Activated T-helper 2 cell treated with anti-CD3 and anti-CD28 coated beads, Interferon-gamma antibody, Interleukin-2, Interleukin-4, amounts not matched to agents 10 μg/mL and 5 μg/mL and 100 μg/mL, durations not matched to agents 14 hours and 24 hours and 36 hours (primary cell): ENCODE measurements at regions of chr9 and their contacts with region 1.

Region 1: GRCh38 chr9:20197976-20198685 is 409.3 kb upstream of the SLC24A2 start:
- DNase-seq: no peak
- H3K4me3 Mint-ChIP-seq: no peak overlapping the region
- H3K27ac Mint-ChIP-seq: no peak overlapping the region
- H3K4me1 Mint-ChIP-seq: peaks cover 10% of the 10 kb centered on the region
- H3K27me3 Mint-ChIP-seq: peaks cover 4% of the 10 kb centered on the region

Region 2: GRCh38 chr9:19757745-19758144 is 440.4 kb before region 1 on chr9:
- intact Hi-C with region 1: no loop called
- DNase-seq: no peak
- H3K4me3 Mint-ChIP-seq: no peak overlapping the region
- H3K27ac Mint-ChIP-seq: no peak overlapping the region
- H3K4me1 Mint-ChIP-seq: peaks cover 10% of the 10 kb centered on the region
- H3K27me3 Mint-ChIP-seq: peaks cover 12% of the 10 kb centered on the region

Region 3: DNA sequence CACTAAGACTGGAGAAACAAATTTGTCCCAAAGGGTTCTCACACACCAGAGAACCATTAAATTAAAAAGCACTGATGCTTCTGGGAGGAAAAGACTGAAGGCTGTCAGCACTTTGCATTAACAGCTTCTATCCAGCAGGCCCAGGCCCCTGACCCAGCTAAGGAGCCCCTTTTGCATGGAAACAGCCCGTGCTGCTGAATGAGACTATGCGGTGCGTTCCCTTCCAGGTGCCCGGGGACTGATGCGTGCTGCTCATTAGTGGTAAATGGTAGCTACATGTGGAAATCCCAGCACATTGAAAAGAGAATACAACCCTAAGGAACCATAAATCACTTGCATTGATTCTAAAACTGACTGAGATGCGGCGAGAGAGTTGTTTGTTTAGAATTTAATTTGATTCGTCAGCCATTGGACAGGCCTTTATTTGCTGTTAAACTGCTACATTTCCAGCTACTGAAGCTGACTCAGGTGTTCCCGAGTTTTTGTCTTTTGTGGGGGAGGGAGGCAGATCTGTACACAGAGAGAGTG is 58.3 kb before region 1 on chr9:
- intact Hi-C with region 1: loop called (anchors 10 kb)
- DNase-seq: no peak
- H3K4me3 Mint-ChIP-seq: no peak overlapping the region
- H3K27ac Mint-ChIP-seq: no peak overlapping the region
- H3K4me1 Mint-ChIP-seq: peaks cover 4% of the 10 kb centered on the region
- H3K27me3 Mint-ChIP-seq: peaks cover 2% of the 10 kb centered on the region

Region 4: GRCh38 chr9:20220286-20220685 is 22.2 kb after region 1 on chr9:
- intact Hi-C with region 1: no loop called
- DNase-seq: no peak
- H3K4me3 Mint-ChIP-seq: no peak overlapping the region
- H3K27ac Mint-ChIP-seq: no peak overlapping the region
- H3K4me1 Mint-ChIP-seq: peaks cover 26% of the 10 kb centered on the region
- H3K27me3 Mint-ChIP-seq: peaks cover 9% of the 10 kb centered on the region

Region 5: DNA sequence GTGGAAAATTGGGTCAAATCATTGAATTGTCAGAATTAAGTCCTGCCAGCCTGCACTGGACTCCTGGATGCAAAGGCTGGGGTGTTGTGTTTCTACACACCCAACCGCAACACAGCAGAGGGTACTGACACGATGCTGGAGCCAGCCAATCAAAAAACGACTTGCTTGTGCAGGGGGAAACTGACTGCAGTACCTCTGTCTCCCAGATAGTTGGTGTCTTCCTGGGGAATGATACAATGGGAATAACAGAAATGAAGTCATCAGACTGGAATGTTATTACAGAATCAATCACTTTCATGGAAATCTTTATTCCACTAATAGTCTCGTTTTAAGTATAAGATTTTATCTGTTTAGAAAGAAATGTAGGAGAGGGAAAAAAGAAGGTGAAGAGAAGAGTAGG is 93.9 kb after region 1 on chr9:
- intact Hi-C with region 1: no loop called
- DNase-seq: no peak
- H3K4me3 Mint-ChIP-seq: no peak overlapping the region
- H3K27ac Mint-ChIP-seq: no peak overlapping the region
- H3K4me1 Mint-ChIP-seq: no peaks in the 10 kb centered on the region
- H3K27me3 Mint-ChIP-seq: no peaks in the 10 kb centered on the region

Region 6: GRCh38 chr9:20319641-20320337 is 121.7 kb after region 1 on chr9:
- intact Hi-C with region 1: no loop called
- DNase-seq: no peak
- H3K4me3 Mint-ChIP-seq: no peak overlapping the region
- H3K27ac Mint-ChIP-seq: peak overlapping the region; percentile 24
- H3K4me1 Mint-ChIP-seq: peaks cover 41% of the 10 kb centered on the region
- H3K27me3 Mint-ChIP-seq: no peaks in the 10 kb centered on the region